ENCODE measurements at regions of chr12 and their contacts with region 1.

Region 1: GRCh38 chr12:121668750-121669520 is 519 bp downstream of the MORN3 start:
- DNase-seq: peak; percentile 63
- ATAC-seq: no peak
- H3K4me3 Mint-ChIP-seq: no peak overlapping the region
- H3K27ac Mint-ChIP-seq: peak overlapping the region; percentile 61
- H3K4me1 Mint-ChIP-seq: peaks cover 66% of the 10 kb centered on the region
- H3K27me3 Mint-ChIP-seq: no peaks in the 10 kb centered on the region

Region 2: GRCh38 chr12:121494093-121494787 is 174.7 kb before region 1 on chr12:
- CTCF ChIA-PET with region 1: interaction called, 17 read pairs
- POLR2A ChIA-PET with region 1: interaction called, 3 read pairs
- DNase-seq: peak; percentile 68
- ATAC-seq: no peak
- H3K4me3 Mint-ChIP-seq: no peak overlapping the region
- H3K27ac Mint-ChIP-seq: peak overlapping the region; percentile 62
- H3K4me1 Mint-ChIP-seq: peaks cover 56% of the 10 kb centered on the region
- H3K27me3 Mint-ChIP-seq: no peaks in the 10 kb centered on the region

Region 3: GRCh38 chr12:121637231-121637914 is 31.6 kb before region 1 on chr12:
- CTCF ChIA-PET with region 1: interaction called, 34 read pairs
- POLR2A ChIA-PET with region 1: interaction called, 6 read pairs
- DNase-seq: peak; percentile 81
- ATAC-seq: peak; percentile 74
- H3K4me3 Mint-ChIP-seq: peak overlapping the region; percentile 52
- H3K27ac Mint-ChIP-seq: peak overlapping the region; percentile 88
- H3K4me1 Mint-ChIP-seq: peaks cover 73% of the 10 kb centered on the region
- H3K27me3 Mint-ChIP-seq: no peaks in the 10 kb centered on the region

Region 4: GRCh38 chr12:121657305-121658008 is 11.5 kb before region 1 on chr12:
- CTCF ChIA-PET with region 1: interaction called, 10 read pairs
- POLR2A ChIA-PET with region 1: interaction called, 3 read pairs
- DNase-seq: no peak
- ATAC-seq: no peak
- H3K4me3 Mint-ChIP-seq: no peak overlapping the region
- H3K27ac Mint-ChIP-seq: peak overlapping the region; percentile 95
- H3K4me1 Mint-ChIP-seq: peaks cover 74% of the 10 kb centered on the region
- H3K27me3 Mint-ChIP-seq: no peaks in the 10 kb centered on the region

Region 5: GRCh38 chr12:121711925-121712460 is 43.1 kb after region 1 on chr12:
- CTCF ChIA-PET with region 1: no interaction called
- POLR2A ChIA-PET with region 1: no interaction called
- DNase-seq: peak; percentile 50
- ATAC-seq: peak; percentile 45
- H3K4me3 Mint-ChIP-seq: peak overlapping the region; percentile 96
- H3K27ac Mint-ChIP-seq: peak overlapping the region; percentile 89
- H3K4me1 Mint-ChIP-seq: peaks cover 38% of the 10 kb centered on the region
- H3K27me3 Mint-ChIP-seq: no peaks in the 10 kb centered on the region

Region 6: GRCh38 chr12:122215771-122216170 is 546.8 kb after region 1 on chr12:
- CTCF ChIA-PET with region 1: no interaction called
- POLR2A ChIA-PET with region 1: no interaction called
- DNase-seq: no peak
- ATAC-seq: no peak
- H3K4me3 Mint-ChIP-seq: no peak overlapping the region
- H3K27ac Mint-ChIP-seq: no peak overlapping the region
- H3K4me1 Mint-ChIP-seq: no peaks in the 10 kb centered on the region
- H3K27me3 Mint-ChIP-seq: no peaks in the 10 kb centered on the region

Measured in activated CD8-positive, alpha-beta T cell treated with anti-CD3 and anti-CD28 coated beads, Interleukin-2, amount 10 ng/mL, durations not matched to agents 7 days and 5 days (primary cell).